HEK293 (cell line): ENCODE measurements at regions of chr10 and their contacts with region 1.

Region 1: DNA sequence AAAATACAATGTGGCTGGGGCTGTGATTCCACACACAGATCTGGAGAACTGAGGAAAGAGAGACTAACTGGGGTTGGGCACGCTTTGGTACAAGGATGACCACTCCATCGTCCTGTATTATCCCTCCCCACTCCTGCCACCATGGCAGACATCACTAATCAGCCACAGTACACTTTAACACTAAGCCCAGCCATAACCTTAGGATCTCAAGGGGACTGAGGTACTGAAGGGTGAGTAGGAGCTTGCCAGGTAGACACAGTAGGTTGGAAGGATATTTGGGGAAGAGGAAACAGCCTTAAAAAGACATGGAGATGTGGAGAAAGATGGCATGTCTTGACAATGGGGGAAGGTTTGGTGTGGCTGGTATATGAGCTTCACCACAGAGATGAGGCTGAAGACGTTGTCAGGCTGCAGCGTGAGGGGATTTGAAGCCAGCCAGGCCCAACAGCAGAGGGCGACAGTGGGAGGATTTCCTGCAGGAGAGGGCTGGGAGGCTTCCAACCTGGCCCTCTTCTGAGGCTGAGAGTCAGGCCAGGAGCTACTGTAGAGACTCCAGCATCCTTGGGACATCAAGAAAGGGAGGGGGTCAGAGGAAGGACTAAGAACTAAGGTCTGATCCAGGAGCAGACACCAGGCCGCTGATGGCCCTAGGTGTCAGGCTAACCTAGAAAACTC is 58.6 kb upstream of the COL13A1 start:
- H3K4me3 ChIP-seq: no peak overlapping the region
- H3K27ac ChIP-seq: no peak overlapping the region
- H3K4me1 ChIP-seq: no peaks in the 10 kb centered on the region
- CTCF ChIP-seq: peak; percentile 48

Region 2: GRCh38 chr10:69269761-69270160 is 473.3 kb before region 1 on chr10:
- CTCF ChIA-PET with region 1: no interaction called
- POLR2A ChIA-PET with region 1: no interaction called
- H3K4me3 ChIP-seq: no peak overlapping the region
- H3K27ac ChIP-seq: no peak overlapping the region
- H3K4me1 ChIP-seq: no peaks in the 10 kb centered on the region
- CTCF ChIP-seq: no peak

Region 3: DNA sequence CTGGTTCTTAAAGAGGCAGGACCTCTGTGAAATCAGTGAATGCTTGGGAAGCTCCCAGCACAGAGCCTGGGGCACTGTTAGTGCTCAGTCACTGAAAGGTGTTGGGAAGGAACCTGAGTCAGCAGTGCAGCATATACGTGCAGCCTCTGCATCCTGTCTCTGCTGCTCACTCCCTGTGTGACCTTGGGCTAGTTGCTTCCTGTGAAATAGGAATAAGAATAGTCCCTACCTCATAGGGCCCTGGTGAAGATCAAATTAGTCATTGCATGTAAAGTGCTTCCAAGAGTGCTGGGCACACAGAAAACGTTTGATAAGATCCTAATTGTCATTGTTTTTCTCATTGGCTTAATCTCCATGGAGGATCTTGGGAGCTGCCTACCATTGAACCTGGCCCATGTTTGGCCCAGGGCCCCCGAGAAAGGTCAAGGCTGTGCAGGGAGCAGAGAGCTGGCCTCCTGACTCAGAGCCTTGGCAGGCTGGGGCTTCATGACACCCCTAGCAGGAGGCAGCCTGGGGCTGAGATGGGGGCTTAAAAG is 14.7 kb before region 1 on chr10:
- CTCF ChIA-PET with region 1: interaction called, 19 read pairs
- POLR2A ChIA-PET with region 1: no interaction called
- H3K4me3 ChIP-seq: no peak overlapping the region
- H3K27ac ChIP-seq: no peak overlapping the region
- H3K4me1 ChIP-seq: no peaks in the 10 kb centered on the region
- CTCF ChIP-seq: no peak

Region 4: GRCh38 chr10:69757553-69758309 is 14.7 kb after region 1 on chr10:
- CTCF ChIA-PET with region 1: interaction called, 12 read pairs
- POLR2A ChIA-PET with region 1: no interaction called
- H3K4me3 ChIP-seq: no peak overlapping the region
- H3K27ac ChIP-seq: no peak overlapping the region
- H3K4me1 ChIP-seq: peaks cover 9% of the 10 kb centered on the region; the same call in 1 of the 2 replicates
- CTCF ChIP-seq: no peak

Region 5: GRCh38 chr10:69780077-69780476 is 37.0 kb after region 1 on chr10:
- CTCF ChIA-PET with region 1: interaction called, 10 read pairs
- POLR2A ChIA-PET with region 1: no interaction called
- H3K4me3 ChIP-seq: no peak overlapping the region
- H3K27ac ChIP-seq: no peak overlapping the region
- H3K4me1 ChIP-seq: no peaks in the 10 kb centered on the region
- CTCF ChIP-seq: no peak

Region 6: DNA sequence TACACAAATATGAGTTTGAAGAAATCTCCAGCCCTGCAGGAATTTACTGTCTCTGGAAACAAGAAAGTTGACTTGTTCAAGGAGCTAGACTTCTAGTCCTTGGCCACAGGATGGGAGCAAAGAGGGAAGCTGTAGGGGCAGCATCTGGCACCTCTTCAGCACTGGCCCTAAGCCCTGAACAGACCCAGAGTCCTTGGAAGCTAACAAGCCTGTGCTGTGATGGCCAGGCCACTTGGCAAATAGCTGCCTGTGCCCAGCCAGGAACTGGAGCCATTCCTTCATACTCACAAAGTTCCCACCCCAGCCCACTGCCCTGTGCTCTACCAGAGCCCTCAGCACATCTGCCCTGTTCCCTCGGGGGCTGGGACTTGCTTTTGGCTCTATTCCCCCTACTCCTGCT is 49.3 kb after region 1 on chr10:
- CTCF ChIA-PET with region 1: interaction called, 10 read pairs
- POLR2A ChIA-PET with region 1: no interaction called
- H3K4me3 ChIP-seq: no peak overlapping the region
- H3K27ac ChIP-seq: no peak overlapping the region
- H3K4me1 ChIP-seq: no peaks in the 10 kb centered on the region
- CTCF ChIP-seq: no peak

Region 7: DNA sequence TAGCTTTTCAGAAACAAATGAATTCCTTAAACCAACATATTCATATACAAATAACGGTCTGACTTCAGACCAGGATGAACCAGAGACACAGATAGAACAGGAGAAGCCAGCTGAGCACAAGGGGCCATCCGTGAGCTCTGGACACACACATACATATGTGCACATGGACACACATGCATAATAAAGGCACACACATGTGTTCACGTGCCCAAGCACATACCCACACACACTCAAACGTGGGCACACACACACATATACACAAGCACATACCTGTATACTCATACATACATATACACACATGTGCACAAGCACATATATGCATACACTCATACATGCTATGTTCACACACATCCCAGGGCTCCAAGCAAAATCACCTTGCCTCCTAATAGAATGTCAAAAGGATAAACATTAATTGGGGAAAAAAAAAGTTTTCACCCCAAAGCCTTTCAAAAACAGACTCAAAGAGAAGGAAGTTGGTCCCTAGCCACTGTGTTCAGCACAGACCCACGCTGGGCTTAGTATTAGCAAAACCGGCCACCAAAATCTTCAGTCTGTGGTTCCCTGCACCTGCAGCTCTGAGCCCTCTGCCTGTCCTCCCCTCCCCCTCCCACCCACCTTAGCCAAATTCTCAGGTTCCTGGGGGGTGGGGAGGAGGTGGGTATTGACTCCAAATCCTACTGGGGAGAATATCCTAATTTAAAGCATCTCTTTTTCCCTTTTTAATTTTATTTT is 209.2 kb after region 1 on chr10:
- CTCF ChIA-PET with region 1: no interaction called
- POLR2A ChIA-PET with region 1: no interaction called
- H3K4me3 ChIP-seq: no peak overlapping the region
- H3K27ac ChIP-seq: no peak overlapping the region
- H3K4me1 ChIP-seq: no peaks in the 10 kb centered on the region
- CTCF ChIP-seq: no peak